HepG2 (cell line): ENCODE measurements at regions of chr11 and their contacts with region 1.

Region 1: DNA sequence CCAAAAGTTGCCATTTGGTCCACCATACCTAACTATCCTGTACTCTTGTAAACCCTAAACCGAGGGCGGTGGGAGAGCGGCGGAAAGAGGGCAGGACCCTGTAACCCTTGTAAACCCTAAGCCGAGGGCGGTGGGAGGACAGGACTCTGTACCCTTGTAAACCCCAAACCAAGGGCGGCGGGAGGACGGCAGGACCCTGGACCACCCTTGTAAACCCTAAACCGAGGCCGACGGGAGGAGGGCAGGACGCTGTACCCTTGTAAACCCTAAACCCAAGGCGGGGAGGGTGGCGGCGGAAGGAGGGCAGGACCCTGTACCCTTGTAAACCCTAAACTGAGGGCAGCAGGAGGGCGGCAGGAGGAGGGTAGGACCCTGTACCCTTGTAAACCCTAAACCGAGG is 12.5 kb upstream of the OR52I2 start:
- DNase-seq: no peak
- ATAC-seq: no peak
- H3K4me3 ChIP-seq: no peak overlapping the region
- H3K27ac ChIP-seq: no peak overlapping the region
- H3K4me1 ChIP-seq: no peaks in the 10 kb centered on the region
- H3K27me3 ChIP-seq: peaks cover 0 to 28% of the 10 kb centered on the region in 2 experiments; a peak in 4 of 5 replicates
- CTCF ChIP-seq: no peak
- EP300 ChIP-seq: no peak
- POLR2A ChIP-seq: no peak
- RAD21 ChIP-seq: no peak

Region 2: DNA sequence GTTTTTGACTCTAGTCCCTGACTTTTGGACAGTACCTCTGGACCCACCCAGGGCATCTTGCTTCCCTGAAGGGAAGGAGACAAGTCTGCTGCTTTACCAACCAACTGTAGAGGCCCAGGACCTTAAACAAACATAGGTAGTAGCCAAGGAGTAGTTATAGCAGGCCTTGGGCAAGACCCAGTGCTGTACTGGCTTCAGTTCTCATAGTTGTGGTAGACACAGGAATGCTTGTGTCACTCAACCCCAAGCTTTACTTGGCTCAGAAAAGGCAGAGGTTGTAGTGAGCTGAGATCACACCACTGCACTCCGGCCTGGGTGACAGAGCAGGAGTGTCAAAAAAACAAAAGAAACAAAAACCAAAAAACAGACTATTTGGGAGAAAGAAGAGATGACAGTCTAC is 45.4 kb before region 1 on chr11:
- CTCF ChIA-PET with region 1: no interaction called
- POLR2A ChIA-PET with region 1: no interaction called
- in situ Hi-C with region 1: no loop called
- intact Hi-C with region 1: loop called (anchors 2 kb)
- DNase-seq: no peak
- ATAC-seq: no peak
- H3K4me3 ChIP-seq: no peak overlapping the region
- H3K27ac ChIP-seq: no peak overlapping the region
- H3K4me1 ChIP-seq: no peaks in the 10 kb centered on the region
- H3K27me3 ChIP-seq: peaks cover 0 to 5% of the 10 kb centered on the region in 2 experiments; a peak in 1 of 5 replicates
- CTCF ChIP-seq: no peak
- EP300 ChIP-seq: no peak
- POLR2A ChIP-seq: no peak
- RAD21 ChIP-seq: no peak

Region 3: DNA sequence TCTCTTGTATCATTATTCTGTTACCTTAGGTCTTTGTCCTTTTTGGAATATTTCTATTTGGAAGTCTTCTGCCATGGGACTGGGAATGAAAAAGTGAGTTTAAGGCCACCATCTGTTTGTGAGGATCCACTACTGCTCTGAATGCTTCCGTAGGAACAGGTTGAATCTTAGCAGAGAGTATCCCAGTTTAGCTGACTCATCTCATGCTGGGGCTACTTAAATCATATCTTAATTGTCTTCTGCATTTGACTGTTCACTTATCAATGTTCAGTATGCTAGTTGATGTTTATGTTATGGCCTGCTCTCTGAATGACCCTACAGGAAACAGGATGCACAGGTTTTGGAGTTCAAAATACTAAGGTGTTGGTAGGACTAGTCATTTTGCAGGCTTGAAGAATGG is 11.0 kb after region 1 on chr11:
- CTCF ChIA-PET with region 1: no interaction called
- POLR2A ChIA-PET with region 1: no interaction called
- in situ Hi-C with region 1: no loop called
- intact Hi-C with region 1: no loop called
- DNase-seq: no peak
- ATAC-seq: no peak
- H3K4me3 ChIP-seq: no peak overlapping the region
- H3K27ac ChIP-seq: no peak overlapping the region
- H3K4me1 ChIP-seq: no peaks in the 10 kb centered on the region
- H3K27me3 ChIP-seq: peaks cover 0 to 26% of the 10 kb centered on the region in 2 experiments; a peak in 2 of 5 replicates
- CTCF ChIP-seq: no peak
- EP300 ChIP-seq: no peak
- POLR2A ChIP-seq: no peak
- RAD21 ChIP-seq: no peak